ENCODE measurements at regions of chr5 and their contacts with region 1.

Region 1: GRCh38 chr5:81851481-81852178 is 100.7 kb upstream of the SSBP2 start:
- DNase-seq: peak; percentile 91
- H3K4me3 Mint-ChIP-seq: peak overlapping the region; percentile 86
- H3K27ac Mint-ChIP-seq: peak overlapping the region; percentile 92
- H3K4me1 Mint-ChIP-seq: peaks cover 40% of the 10 kb centered on the region
- H3K27me3 Mint-ChIP-seq: no peaks in the 10 kb centered on the region

Region 2: DNA sequence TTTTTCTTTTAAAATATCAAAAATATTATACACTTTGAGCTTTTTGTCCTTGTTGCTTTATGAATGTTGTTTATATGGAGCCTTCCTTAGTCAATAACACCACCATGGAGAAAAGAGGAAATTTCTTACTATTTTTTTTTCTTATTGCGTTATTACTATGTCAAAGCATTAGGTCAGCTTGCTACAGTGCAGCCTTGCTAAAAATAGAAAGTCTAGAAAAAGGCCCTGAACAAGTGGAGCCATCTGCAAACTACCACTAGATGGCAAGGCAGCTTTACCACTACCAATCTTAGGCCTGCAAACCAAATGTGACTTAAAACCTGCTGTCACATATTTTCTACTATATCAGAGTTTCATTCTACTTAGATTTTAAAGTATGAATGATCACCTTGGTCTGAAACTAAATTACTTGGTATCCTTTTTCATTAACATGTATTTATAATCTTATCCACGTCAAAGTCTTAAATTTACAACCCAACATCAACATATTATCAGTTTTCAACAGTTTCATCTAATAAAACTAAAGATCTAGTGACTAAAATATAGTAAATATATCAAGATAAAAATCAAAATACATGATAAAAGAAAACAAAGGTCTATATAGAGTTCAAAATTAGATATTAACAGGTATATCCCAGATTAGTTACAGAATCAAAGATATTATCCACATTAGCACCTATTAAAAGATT is 344.6 kb before region 1 on chr5:
- CTCF ChIA-PET with region 1: no interaction called
- intact Hi-C with region 1: loop called (anchors 2 kb)
- DNase-seq: peak; percentile 62
- H3K4me3 Mint-ChIP-seq: no peak overlapping the region
- H3K27ac Mint-ChIP-seq: no peak overlapping the region
- H3K4me1 Mint-ChIP-seq: no peaks in the 10 kb centered on the region
- H3K27me3 Mint-ChIP-seq: no peaks in the 10 kb centered on the region

Region 3: DNA sequence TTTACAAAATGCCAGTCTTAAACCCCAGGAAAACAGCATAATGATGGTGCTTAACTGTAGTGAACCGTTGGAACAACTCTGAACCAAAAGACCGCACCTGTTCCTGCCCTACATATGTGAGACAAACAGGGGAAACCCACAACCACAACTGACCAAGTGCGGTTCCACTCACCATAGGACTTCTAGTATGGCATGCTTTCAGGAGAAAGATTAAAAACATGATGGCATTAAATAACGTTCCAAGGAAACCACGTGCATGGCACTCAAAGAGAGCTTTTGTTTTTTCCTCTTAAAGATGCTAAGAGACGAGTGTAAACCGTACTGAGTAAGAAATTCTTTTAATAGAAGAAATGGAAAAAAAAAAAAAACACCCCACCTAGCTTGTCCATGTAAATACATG is 220.5 kb before region 1 on chr5:
- CTCF ChIA-PET with region 1: no interaction called
- intact Hi-C with region 1: loop called (anchors 5 kb)
- DNase-seq: peak; percentile 51
- H3K4me3 Mint-ChIP-seq: no peak overlapping the region
- H3K27ac Mint-ChIP-seq: no peak overlapping the region
- H3K4me1 Mint-ChIP-seq: peaks cover 14% of the 10 kb centered on the region
- H3K27me3 Mint-ChIP-seq: no peaks in the 10 kb centered on the region

Region 4: DNA sequence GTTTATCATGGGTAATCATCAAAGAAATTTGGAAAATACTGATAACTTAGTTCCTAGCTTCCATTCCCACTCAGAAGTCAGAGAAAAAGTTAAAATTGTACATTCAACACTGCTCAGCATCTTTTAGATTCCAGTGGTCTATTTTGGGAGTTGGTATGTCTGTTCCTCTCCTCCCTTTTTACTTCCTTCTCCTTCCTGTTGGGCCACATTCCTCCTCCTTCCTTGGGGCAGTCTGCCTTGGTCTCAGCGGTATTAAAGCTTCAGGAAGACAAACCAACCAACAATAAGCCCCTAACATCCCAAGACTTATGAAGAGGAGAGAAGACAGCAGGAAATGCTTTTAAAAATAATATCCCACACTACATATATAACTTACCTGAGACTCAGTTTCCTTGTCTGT is 50.8 kb before region 1 on chr5:
- CTCF ChIA-PET with region 1: no interaction called
- intact Hi-C with region 1: no loop called
- DNase-seq: no peak
- H3K4me3 Mint-ChIP-seq: no peak overlapping the region
- H3K27ac Mint-ChIP-seq: no peak overlapping the region
- H3K4me1 Mint-ChIP-seq: peaks cover 10% of the 10 kb centered on the region
- H3K27me3 Mint-ChIP-seq: no peaks in the 10 kb centered on the region

Region 5: DNA sequence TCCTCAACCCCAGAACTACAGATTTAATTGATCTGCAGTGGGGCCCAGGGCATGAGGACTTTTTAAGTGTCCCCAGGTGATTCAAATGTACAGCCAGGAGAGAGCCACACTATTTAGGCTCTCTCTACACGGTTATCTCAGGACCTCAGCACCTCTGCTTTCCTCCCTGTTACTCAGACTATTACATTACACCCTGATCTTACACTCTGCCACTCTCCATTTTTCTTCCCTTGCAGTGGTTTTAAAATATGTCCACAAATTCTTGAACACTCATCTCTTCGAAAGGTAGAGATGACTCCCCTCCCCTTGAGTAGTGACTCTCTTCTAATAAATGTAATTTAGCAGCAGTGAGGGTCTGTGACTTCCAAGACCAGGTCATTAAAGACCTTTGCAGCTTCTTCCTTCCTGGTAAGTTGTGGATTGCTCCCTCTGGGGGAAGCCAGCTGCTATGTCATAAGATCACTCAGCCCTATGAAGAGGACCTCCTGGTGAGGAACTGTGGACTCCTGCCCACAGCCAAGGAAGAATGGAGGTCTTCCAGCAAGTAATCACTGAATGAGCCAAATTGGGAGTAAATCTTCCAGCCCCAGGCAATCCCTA is 13.2 kb before region 1 on chr5:
- CTCF ChIA-PET with region 1: interaction called, 23 read pairs
- intact Hi-C with region 1: no loop called
- DNase-seq: peak; percentile 46
- H3K4me3 Mint-ChIP-seq: no peak overlapping the region
- H3K27ac Mint-ChIP-seq: no peak overlapping the region
- H3K4me1 Mint-ChIP-seq: peaks cover 9% of the 10 kb centered on the region
- H3K27me3 Mint-ChIP-seq: no peaks in the 10 kb centered on the region

Region 6: GRCh38 chr5:82278095-82278918 is 426.7 kb after region 1 on chr5 and contains the start of gene RPS23:
- CTCF ChIA-PET with region 1: no interaction called
- intact Hi-C with region 1: loop called (anchors 1 kb)
- DNase-seq: peak; percentile 93
- H3K4me3 Mint-ChIP-seq: peak within 1 kb of the TSS; percentile 95
- H3K27ac Mint-ChIP-seq: peak within 1 kb of the TSS; percentile 99
- H3K4me1 Mint-ChIP-seq: peaks cover 38% of the 10 kb centered on the region
- H3K27me3 Mint-ChIP-seq: no peaks in the 10 kb centered on the region
- total RNA-seq, gene RPS23: 3,081 to 3,109 TPM

Measured in activated naive CD4-positive, alpha-beta T cell treated with anti-CD3 and anti-CD28 coated beads for 36 hours (primary cell).